GM12878 (cell line): ENCODE measurements at regions of chr6 and their contacts with region 1.

Region 1: DNA sequence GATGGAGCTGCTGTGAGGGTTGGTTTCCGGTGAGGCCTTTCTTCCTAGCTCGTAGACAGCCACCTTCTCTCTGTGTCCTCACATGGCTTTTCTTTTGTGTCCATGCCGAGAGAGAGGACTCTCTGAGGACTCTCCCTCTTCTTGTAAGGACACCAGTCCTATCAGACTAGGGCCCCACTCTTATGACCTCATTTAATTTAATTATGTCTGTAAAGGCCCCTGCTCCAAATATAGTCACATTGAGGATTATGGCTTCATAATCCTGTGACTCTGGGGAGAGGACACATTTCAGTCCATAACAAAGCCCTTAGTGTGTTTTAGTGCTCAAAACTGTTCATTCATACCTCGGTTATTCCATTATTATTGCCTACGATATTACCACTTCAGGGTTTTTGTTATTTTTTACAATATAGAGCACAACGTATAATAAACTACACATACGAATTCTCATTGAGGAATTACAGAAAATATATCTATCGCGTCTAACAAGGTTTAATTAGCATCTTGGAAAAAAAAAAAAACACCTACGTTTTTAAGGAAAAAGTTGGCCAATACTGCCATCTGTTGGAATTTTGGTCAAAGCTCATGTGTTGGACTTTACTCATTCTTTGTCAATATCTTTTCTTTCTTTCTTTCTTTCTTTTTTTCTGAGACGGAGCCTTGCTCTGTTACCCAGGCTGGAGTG is 20.0 kb upstream of the TFAP2A start:
- DNase-seq: no peak
- ATAC-seq: peak; percentile 43
- H3K4me3 ChIP-seq: no peak overlapping the region
- H3K27ac ChIP-seq: no peak overlapping the region
- H3K4me1 ChIP-seq: no peaks in the 10 kb centered on the region
- H3K27me3 ChIP-seq: no peaks in the 10 kb centered on the region
- CTCF ChIP-seq: peak; percentile 43 to 51 (median 45); a peak in 4 of 6 replicates
- EP300 ChIP-seq: no peak
- POLR2A ChIP-seq: no peak
- RAD21 ChIP-seq: peak; percentile 73

Region 2: DNA sequence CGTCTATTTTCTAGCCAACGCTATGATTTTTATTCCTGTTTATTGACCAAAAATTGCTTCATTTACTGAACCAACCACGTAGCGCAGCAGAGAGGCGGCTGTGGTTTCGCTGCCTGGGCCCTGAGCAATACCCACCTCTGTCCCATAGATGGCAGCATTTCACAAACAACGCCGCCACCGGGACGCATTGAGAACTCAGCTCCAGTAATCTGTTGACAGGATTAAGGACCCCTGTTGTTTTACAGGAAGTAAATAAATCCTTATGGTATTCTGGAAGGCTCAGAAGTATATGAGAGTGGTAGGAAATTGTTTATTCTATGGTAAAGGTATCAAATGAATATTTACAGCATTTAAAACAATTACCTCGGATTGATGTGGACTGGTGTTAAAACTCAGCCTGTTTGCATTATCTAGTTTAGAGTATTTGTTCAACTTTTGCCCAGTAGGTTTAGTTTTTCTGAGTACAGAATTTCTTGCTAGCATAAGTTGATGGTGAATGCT is 1451.6 kb before region 1 on chr6:
- CTCF ChIA-PET with region 1: interaction called, 27 read pairs
- POLR2A ChIA-PET with region 1: no interaction called
- RAD21 ChIA-PET with region 1: interaction called, 20 read pairs
- SMC1A ChIA-PET with region 1: interaction called, 21 read pairs
- in situ Hi-C with region 1: loop called (anchors 5 kb)
- intact Hi-C with region 1: loop called (anchors 2 kb)
- DNase-seq: peak; percentile 4
- ATAC-seq: peak; percentile 98
- H3K4me3 ChIP-seq: no peak overlapping the region
- H3K27ac ChIP-seq: no peak overlapping the region
- H3K4me1 ChIP-seq: no peaks in the 10 kb centered on the region
- H3K27me3 ChIP-seq: no peaks in the 10 kb centered on the region
- CTCF ChIP-seq: peak; percentile 89 to 97 (median 93)
- EP300 ChIP-seq: no peak
- POLR2A ChIP-seq: no peak
- RAD21 ChIP-seq: peak; percentile 87

Region 3: DNA sequence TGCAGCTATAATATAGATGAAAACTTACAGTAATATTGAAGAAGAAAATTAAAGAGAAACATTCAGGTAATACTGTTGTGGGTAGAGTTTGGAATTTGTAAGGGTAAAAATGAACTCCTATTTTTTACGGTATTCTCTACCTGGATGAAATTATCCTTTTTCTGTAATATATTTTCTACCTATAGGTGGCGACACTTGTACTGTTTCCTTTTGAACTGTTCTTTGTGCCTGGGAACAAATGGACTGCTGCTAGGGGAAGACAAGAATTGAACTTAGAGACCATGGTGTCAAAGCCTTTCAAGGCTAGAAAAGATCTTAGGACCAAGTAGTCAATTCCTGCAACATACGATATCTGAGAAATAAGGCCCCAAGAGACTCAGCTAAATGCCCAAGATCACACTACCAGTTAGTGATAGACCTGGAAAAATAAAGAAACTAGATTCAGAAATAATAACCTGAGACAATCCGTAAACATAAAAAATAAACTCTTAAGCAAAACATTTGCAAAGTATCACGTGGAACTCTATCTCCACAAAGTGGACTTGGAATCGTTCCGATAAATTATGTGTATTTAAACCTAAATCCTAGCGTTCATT is 403.8 kb before region 1 on chr6:
- CTCF ChIA-PET with region 1: interaction called, 41 read pairs
- POLR2A ChIA-PET with region 1: no interaction called
- RAD21 ChIA-PET with region 1: interaction called, 5 read pairs
- SMC1A ChIA-PET with region 1: interaction called, 21 read pairs
- in situ Hi-C with region 1: loop called (anchors 5 kb)
- intact Hi-C with region 1: no loop called
- DNase-seq: no peak
- ATAC-seq: peak; percentile 55; the same call in 2 of the 3 replicates
- H3K4me3 ChIP-seq: no peak overlapping the region
- H3K27ac ChIP-seq: no peak overlapping the region
- H3K4me1 ChIP-seq: no peaks in the 10 kb centered on the region
- H3K27me3 ChIP-seq: no peaks in the 10 kb centered on the region
- CTCF ChIP-seq: peak; percentile 39 to 54 (median 45); a peak in 5 of 6 replicates
- EP300 ChIP-seq: no peak
- POLR2A ChIP-seq: no peak
- RAD21 ChIP-seq: peak; percentile 32; the same call in 1 of the 2 replicates

Region 4: DNA sequence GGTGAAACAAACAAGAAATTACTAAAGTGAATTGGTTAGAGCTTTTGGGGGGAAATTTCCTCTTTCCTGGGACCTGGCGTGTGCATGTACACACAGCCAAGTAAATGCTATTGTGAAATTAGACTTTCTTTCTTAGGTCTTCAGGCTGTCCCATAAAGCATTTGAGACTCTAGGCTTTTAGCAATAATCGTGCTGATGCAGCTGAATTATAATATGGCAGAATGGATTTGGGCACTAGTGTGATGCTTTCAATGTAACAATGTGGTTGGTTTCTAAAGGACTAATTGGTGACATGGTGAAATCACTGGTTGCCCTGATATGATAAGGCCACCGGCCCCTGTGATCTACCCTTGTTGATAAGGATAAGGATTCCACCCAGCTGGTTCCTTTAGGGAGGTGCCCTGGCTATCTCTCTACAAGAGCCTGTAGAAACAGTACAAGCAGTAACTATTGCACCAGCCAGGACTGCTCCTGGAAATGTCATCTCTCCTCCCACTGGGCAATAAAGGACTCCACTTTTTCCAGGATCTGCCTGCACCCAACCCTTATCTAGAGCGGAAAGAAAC is 184.1 kb before region 1 on chr6:
- CTCF ChIA-PET with region 1: interaction called, 17 read pairs
- POLR2A ChIA-PET with region 1: no interaction called
- RAD21 ChIA-PET with region 1: interaction called, 9 read pairs
- SMC1A ChIA-PET with region 1: interaction called, 9 read pairs
- in situ Hi-C with region 1: loop called (anchors 5 kb)
- intact Hi-C with region 1: no loop called
- DNase-seq: no peak
- ATAC-seq: no peak
- H3K4me3 ChIP-seq: no peak overlapping the region
- H3K27ac ChIP-seq: no peak overlapping the region
- H3K4me1 ChIP-seq: no peaks in the 10 kb centered on the region
- H3K27me3 ChIP-seq: no peaks in the 10 kb centered on the region; a peak in 1 of 4 replicates
- CTCF ChIP-seq: no peak
- EP300 ChIP-seq: no peak
- POLR2A ChIP-seq: no peak
- RAD21 ChIP-seq: no peak

Region 5: DNA sequence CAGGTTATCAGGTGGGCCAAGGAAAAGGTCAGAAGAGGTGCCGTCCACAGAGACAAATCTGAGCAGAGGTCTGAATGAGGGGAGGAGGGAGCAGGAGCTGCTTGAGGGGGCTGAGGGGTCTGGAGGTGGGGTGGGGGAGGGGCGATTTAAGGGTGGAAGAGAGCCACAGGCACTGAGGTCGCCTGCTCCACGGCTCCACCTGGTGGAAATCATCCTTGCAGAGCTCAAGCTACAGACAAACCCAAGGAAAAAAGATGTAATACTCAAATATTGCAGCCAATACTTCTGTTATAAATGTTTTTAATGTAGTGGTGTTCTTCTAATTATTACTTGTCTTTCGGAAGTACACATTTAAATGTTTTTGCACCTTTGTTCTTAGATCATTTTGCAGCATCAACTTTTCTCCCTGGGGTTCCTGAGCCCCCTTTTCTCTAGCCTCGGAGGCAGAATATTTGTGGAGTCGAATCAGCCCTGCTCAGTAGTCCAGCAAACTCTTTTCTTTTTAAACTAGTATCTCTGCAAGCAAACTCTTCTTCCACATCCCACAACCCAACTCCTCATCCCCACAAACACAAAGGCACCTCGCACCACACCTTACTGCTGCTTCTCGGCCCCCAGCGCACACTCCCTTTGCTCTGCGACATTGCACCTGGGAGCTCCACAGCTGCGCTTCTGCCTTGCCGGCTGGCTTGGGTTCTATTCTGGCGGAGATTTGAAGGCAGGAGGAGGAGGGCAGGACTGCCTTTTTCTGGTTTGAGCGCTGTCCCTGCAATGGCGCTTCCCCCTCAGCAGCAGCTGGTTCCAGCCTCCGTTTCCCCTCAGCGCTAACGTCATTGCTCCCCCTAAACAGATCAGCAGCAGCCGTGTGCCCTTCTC is 31.0 kb after region 1 on chr6:
- CTCF ChIA-PET with region 1: interaction called, 25 read pairs
- POLR2A ChIA-PET with region 1: no interaction called
- RAD21 ChIA-PET with region 1: interaction called, 26 read pairs
- SMC1A ChIA-PET with region 1: interaction called, 42 read pairs
- in situ Hi-C with region 1: no loop called
- intact Hi-C with region 1: no loop called
- DNase-seq: no peak
- ATAC-seq: peak; percentile 69
- H3K4me3 ChIP-seq: no peak overlapping the region
- H3K27ac ChIP-seq: no peak overlapping the region
- H3K4me1 ChIP-seq: peaks cover under 1% of the 10 kb centered on the region; the same call in 1 of the 2 replicates
- H3K27me3 ChIP-seq: no peaks in the 10 kb centered on the region; a peak in 1 of 4 replicates
- CTCF ChIP-seq: peak; percentile 48 to 73 (median 59)
- EP300 ChIP-seq: no peak
- POLR2A ChIP-seq: no peak
- RAD21 ChIP-seq: peak; percentile 44